B cell (primary cell): ENCODE measurements at regions of chr16 and their contacts with region 1.

Region 1: DNA sequence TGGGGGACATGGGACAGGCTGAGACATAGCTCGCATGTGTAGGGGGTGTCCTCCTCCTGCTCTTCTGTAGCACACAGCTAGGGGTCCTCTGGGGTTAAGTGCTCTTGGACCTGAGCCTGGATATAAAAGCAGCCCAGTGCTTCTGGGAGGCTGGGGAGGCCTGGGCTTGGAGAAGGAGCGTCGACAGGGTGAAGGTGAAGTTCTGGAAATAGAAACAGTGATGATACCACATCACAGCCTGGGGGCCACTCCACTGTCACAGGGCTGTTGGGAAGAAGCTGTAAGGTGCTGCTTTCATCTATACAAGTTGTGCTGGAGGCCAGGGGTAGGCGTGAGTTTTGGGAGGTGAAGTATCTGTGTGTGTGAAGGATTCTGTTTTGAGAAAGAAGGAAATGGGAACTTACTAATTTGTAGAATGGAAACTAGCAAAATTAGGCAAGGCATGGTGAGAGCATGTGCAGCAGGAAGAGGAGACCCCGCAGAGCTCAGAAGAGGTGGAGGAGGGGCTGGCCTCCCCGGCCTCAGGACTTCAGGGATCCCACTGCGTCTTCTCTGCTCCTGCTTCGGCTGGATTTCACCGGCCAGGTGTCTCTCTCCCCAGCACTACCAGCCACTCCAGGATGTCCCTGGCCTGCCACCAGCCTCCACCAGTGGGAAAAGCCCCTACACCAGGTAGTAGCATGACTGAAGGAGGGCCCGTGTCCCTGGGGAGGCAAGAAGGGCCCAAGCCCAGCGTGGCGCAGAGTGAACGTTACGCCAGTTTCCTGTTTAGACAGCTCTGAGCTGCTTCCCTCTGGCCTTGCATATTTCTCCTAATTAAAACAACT is 19.4 kb downstream of the PLCG2 start:
- DNase-seq: peak; percentile 87
- ATAC-seq: peak; percentile 80
- H3K4me3 ChIP-seq: peak overlapping the region in 3 of 5 experiments; percentile 4 to 38 (median 6)
- H3K4me3 Mint-ChIP-seq: peak overlapping the region; percentile 77
- H3K27ac ChIP-seq: peak overlapping the region; percentile 90 to 97
- H3K27ac Mint-ChIP-seq: peak overlapping the region; percentile 97
- H3K4me1 ChIP-seq: peaks cover 90 to 98% of the 10 kb centered on the region in 2 donors
- H3K4me1 Mint-ChIP-seq: peaks cover 77% of the 10 kb centered on the region
- H3K27me3 ChIP-seq: no peaks in the 10 kb centered on the region
- H3K27me3 Mint-ChIP-seq: no peaks in the 10 kb centered on the region
- CTCF ChIP-seq: no peak

Region 2: GRCh38 chr16:81786321-81786720 is 12.2 kb before region 1 on chr16:
- CTCF ChIA-PET with region 1: interaction called, 5 read pairs
- POLR2A ChIA-PET with region 1: interaction called, 7 read pairs
- intact Hi-C with region 1: loop called (anchors 1 kb)
- DNase-seq: no peak
- ATAC-seq: no peak
- H3K4me3 ChIP-seq: no peak overlapping the region
- H3K4me3 Mint-ChIP-seq: peak overlapping the region; percentile 82
- H3K27ac ChIP-seq: peak overlapping the region; percentile 30 to 74
- H3K27ac Mint-ChIP-seq: peak overlapping the region; percentile 72
- H3K4me1 ChIP-seq: peaks cover 76 to 84% of the 10 kb centered on the region in 2 donors
- H3K4me1 Mint-ChIP-seq: peaks cover 89% of the 10 kb centered on the region
- H3K27me3 ChIP-seq: no peaks in the 10 kb centered on the region
- H3K27me3 Mint-ChIP-seq: no peaks in the 10 kb centered on the region
- CTCF ChIP-seq: no peak

Region 3: GRCh38 chr16:81817789-81818567 is 19.5 kb after region 1 on chr16:
- CTCF ChIA-PET with region 1: interaction called, 20 read pairs
- POLR2A ChIA-PET with region 1: interaction called, 10 read pairs
- intact Hi-C with region 1: loop called (anchors 1 kb)
- DNase-seq: peak; percentile 88
- ATAC-seq: peak; percentile 51
- H3K4me3 ChIP-seq: peak overlapping the region in 3 of 5 experiments; percentile 12 to 44 (median 29)
- H3K4me3 Mint-ChIP-seq: peak overlapping the region; percentile 89
- H3K27ac ChIP-seq: peak overlapping the region; percentile 94 to 98
- H3K27ac Mint-ChIP-seq: peak overlapping the region; percentile 100
- H3K4me1 ChIP-seq: peaks cover 97 to 100% of the 10 kb centered on the region in 2 donors
- H3K4me1 Mint-ChIP-seq: peaks cover 89% of the 10 kb centered on the region
- H3K27me3 ChIP-seq: no peaks in the 10 kb centered on the region
- H3K27me3 Mint-ChIP-seq: no peaks in the 10 kb centered on the region
- CTCF ChIP-seq: no peak

Region 4: DNA sequence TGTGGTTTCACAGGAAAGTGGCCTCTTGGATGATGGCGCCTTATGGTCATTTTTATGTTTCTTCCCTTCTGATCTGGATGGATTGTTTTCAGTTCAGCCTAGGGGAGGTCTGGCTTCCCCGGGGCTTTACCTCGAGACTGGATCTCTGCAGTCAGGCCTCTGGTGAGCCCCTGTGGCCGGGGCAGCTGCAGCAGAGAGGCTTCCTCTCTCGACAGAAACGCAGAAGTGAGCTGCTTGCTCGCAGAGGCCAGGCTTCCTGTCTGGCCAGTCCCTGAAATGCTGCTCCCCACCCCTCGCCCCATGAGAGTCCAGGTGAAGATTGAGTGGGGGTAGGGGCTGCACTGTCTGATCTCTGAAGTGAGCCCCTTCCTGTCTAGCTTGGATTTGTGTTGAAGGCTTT is 24.6 kb after region 1 on chr16:
- CTCF ChIA-PET with region 1: interaction called, 20 read pairs
- POLR2A ChIA-PET with region 1: interaction called, 12 read pairs
- intact Hi-C with region 1: loop called (anchors 1 kb)
- DNase-seq: peak; percentile 86
- ATAC-seq: peak; percentile 51
- H3K4me3 ChIP-seq: peak overlapping the region; percentile 23 to 65 (median 54)
- H3K4me3 Mint-ChIP-seq: peak overlapping the region; percentile 75
- H3K27ac ChIP-seq: peak overlapping the region; percentile 94 to 98
- H3K27ac Mint-ChIP-seq: peak overlapping the region; percentile 92
- H3K4me1 ChIP-seq: peaks cover 96 to 100% of the 10 kb centered on the region in 2 donors
- H3K4me1 Mint-ChIP-seq: peaks cover 94% of the 10 kb centered on the region
- H3K27me3 ChIP-seq: no peaks in the 10 kb centered on the region
- H3K27me3 Mint-ChIP-seq: no peaks in the 10 kb centered on the region
- CTCF ChIP-seq: no peak